Activated CD4-positive, alpha-beta memory T cell treated with anti-CD3 and anti-CD28 coated beads, Interleukin-2, amount 10 ng/mL, durations not matched to agents 7 days and 5 days (primary cell): ENCODE measurements at regions of chr4 and their contacts with region 1.

Region 1: GRCh38 chr4:16183604-16184003 is 42.7 kb downstream of the TAPT1 start:
- DNase-seq: no peak
- H3K4me3 Mint-ChIP-seq: no peak overlapping the region
- H3K27ac Mint-ChIP-seq: no peak overlapping the region
- H3K4me1 Mint-ChIP-seq: no peaks in the 10 kb centered on the region
- H3K27me3 Mint-ChIP-seq: no peaks in the 10 kb centered on the region

Region 2: DNA sequence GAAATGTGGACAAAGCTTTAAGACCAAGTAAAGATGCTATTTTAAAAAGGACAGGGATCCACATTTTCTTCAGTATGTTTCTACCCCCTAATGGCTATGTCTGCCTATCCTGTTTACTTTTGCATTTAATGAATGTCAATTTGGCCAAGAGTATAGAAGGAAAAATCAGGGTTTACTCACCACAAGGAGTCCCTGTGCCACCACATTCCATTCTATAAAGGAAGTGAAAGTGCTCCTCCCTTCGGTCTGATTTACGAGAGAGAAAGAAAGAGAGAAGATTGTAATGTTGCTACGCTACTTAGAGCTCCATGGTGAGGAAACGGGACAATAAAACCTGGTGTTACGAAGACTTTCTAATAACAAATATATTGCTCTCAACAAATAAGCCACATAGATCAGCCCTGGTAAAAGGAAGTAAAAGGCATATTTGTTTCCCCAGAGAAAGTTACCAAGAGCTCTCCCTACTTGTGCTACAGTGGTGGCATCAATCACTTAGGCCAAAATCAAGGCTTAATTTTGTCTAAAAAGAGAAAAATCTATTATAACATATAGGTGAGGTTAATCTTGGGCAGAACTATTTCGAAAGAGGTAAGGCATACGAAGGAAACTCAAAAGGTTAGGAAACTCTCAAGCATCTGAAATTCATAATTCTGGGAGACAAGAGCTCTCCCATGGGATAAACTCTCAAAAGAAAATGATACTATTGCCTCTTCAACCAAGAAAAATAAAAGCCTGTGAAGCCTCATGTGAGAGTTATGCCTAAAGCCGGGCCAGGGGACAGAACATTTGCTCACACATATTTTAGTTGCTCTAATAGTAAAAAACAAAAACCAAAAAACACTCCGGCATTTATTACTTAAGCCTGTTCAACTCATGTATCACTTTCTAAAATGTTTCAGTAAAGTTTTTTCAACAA is 13.1 kb after region 1 on chr4:
- CTCF ChIA-PET with region 1: interaction called, 12 read pairs
- POLR2A ChIA-PET with region 1: no interaction called
- DNase-seq: no peak
- H3K4me3 Mint-ChIP-seq: no peak overlapping the region
- H3K27ac Mint-ChIP-seq: no peak overlapping the region
- H3K4me1 Mint-ChIP-seq: peaks cover 12% of the 10 kb centered on the region
- H3K27me3 Mint-ChIP-seq: no peaks in the 10 kb centered on the region